CD4-positive, alpha-beta T cell (primary cell): ENCODE measurements at regions of chr5 and their contacts with region 1.

Region 1: GRCh38 chr5:77086689-77087483 is at the start of gene ZBED3:
- DNase-seq: peak in 13 of 14 experiments; percentile 27 to 78 (median 50)
- ATAC-seq: peak; percentile 88
- H3K4me3 ChIP-seq: peak within 1 kb of the TSS; percentile 80
- H3K4me3 Mint-ChIP-seq: peak within 1 kb of the TSS; percentile 96
- H3K27ac ChIP-seq: no peak within 1 kb of the TSS
- H3K27ac Mint-ChIP-seq: peak within 1 kb of the TSS; percentile 73
- H3K4me1 ChIP-seq: peaks cover 15% of the 10 kb centered on the region
- H3K4me1 Mint-ChIP-seq: peaks cover 13% of the 10 kb centered on the region
- H3K27me3 ChIP-seq: peaks cover 0 to 6% of the 10 kb centered on the region in 2 experiments
- H3K27me3 Mint-ChIP-seq: peaks cover 11% of the 10 kb centered on the region
- CTCF ChIP-seq: peak; percentile 26
- total RNA-seq, gene ZBED3: 3.0 to 3.7 TPM

Region 2: DNA sequence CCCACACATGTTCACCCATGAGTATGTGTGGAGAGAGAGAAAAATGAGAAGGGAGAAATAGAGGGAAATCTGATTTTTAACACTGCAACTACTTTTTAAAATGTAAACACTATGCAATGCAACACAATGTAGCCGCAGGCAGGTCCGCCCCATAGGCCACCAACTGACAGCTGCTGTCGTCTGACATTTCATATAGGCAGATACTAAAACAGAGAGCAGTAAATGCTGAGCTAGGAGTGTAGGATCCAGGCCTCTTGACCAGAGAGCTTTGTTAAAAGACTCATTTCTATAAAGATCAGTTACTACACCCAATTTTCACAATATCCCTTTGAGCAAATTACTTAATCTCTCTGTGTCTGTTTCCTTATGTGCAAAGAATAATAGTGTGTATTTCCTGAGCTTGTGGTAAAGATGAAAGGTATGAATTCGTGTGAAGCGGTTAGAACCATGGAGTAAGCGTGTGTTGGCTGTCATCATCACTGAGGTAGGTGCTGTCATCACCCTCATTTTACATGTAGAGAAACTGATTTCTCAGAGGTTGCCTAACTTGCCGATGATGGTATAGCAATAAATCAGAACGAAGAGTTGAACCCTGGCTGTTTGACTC is 68.4 kb after region 1 on chr5:
- CTCF ChIA-PET with region 1: no interaction called
- POLR2A ChIA-PET with region 1: no interaction called
- intact Hi-C with region 1: loop called in 1 of 2 experiments (anchors 5 kb)
- DNase-seq: peak in 12 of 14 experiments; percentile 3 to 88 (median 24)
- ATAC-seq: peak; percentile 93
- H3K4me3 ChIP-seq: no peak overlapping the region
- H3K4me3 Mint-ChIP-seq: peak overlapping the region; percentile 1
- H3K27ac ChIP-seq: no peak overlapping the region
- H3K27ac Mint-ChIP-seq: peak overlapping the region; percentile 81
- H3K4me1 ChIP-seq: peaks cover 28% of the 10 kb centered on the region
- H3K4me1 Mint-ChIP-seq: peaks cover 34% of the 10 kb centered on the region
- H3K27me3 ChIP-seq: no peaks in the 10 kb centered on the region
- H3K27me3 Mint-ChIP-seq: peaks cover 4% of the 10 kb centered on the region
- CTCF ChIP-seq: no peak

Region 3: GRCh38 chr5:77356740-77357139 is 269.9 kb after region 1 on chr5:
- CTCF ChIA-PET with region 1: no interaction called
- POLR2A ChIA-PET with region 1: no interaction called
- intact Hi-C with region 1: no loop called
- DNase-seq: no peak
- ATAC-seq: no peak
- H3K4me3 ChIP-seq: no peak overlapping the region
- H3K4me3 Mint-ChIP-seq: no peak overlapping the region
- H3K27ac ChIP-seq: no peak overlapping the region
- H3K27ac Mint-ChIP-seq: no peak overlapping the region
- H3K4me1 ChIP-seq: no peaks in the 10 kb centered on the region
- H3K4me1 Mint-ChIP-seq: no peaks in the 10 kb centered on the region
- H3K27me3 ChIP-seq: no peaks in the 10 kb centered on the region
- H3K27me3 Mint-ChIP-seq: no peaks in the 10 kb centered on the region
- CTCF ChIP-seq: no peak

Region 4: DNA sequence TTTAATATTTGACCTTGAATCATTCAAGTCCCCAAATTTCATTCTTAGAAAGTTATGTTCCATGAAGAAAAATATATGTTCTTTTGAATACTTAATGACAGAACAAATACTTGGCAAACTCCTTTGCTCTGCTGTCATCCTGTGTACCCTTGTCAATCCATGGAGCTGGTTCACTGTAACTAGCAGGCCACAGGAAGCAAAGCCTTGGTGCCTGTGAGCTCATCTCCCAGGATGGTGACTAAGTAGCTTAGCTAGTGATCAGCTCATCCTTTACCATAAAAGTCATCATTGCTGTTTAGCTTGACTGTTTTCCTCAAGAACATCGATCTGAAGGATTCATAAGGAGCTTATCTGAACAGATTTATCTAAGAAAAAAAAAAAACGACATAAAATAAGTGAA is 339.8 kb after region 1 on chr5:
- CTCF ChIA-PET with region 1: no interaction called
- POLR2A ChIA-PET with region 1: no interaction called
- intact Hi-C with region 1: no loop called
- DNase-seq: no peak
- ATAC-seq: no peak
- H3K4me3 ChIP-seq: no peak overlapping the region
- H3K4me3 Mint-ChIP-seq: no peak overlapping the region
- H3K27ac ChIP-seq: no peak overlapping the region
- H3K27ac Mint-ChIP-seq: no peak overlapping the region
- H3K4me1 ChIP-seq: no peaks in the 10 kb centered on the region
- H3K4me1 Mint-ChIP-seq: no peaks in the 10 kb centered on the region
- H3K27me3 ChIP-seq: no peaks in the 10 kb centered on the region
- H3K27me3 Mint-ChIP-seq: no peaks in the 10 kb centered on the region
- CTCF ChIP-seq: no peak